ENCODE measurements at regions of chr3 and their contacts with region 1.

Region 1: DNA sequence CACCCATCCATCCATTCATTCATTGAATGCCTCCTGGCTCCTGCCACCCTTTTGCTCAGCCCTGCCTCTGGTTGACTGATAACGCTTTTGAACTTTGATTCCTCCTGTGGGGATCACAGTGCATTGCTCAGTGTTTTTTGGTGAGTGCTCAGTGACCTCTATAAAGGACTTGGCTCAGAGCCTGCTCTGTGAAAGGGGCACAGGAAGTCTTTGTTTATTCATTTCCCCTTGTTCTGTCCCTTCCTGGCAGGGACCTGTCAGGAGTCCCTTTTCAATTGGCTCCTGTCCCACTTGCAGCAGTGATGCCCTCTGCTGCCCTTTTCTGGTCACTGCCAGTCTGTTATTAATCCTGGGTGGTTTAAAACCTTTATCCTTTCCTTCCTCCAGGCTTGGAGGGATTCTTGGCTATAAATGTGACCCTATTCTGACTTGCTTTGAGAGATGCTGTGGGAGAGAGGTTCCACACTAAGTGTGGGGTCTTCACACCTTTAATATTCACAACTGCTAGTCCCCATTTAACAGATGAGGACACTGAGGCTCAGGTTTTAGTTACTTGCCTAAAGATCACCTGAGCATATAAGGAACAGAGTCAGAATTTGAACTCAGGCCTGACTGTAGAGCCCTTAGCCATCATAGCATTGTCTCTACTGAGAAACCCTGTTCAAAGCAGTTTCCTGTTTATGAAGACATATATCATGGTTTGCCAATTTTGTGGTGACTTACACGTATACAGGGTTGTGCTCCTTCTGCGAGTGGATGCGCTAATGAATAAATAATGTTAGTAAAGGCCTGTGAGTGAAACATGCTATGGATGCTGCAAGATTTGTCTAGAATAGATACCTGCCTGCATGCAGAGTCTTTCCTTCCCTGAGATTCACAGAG is 23.2 kb upstream of the TATDN2 start:
- DNase-seq: peak; percentile 72 to 73
- H3K4me3 ChIP-seq: no peak overlapping the region
- H3K27ac ChIP-seq: no peak overlapping the region
- H3K4me1 ChIP-seq: peaks cover 42% of the 10 kb centered on the region
- H3K27me3 ChIP-seq: no peaks in the 10 kb centered on the region
- CTCF ChIP-seq: peak; percentile 90

Region 2: GRCh38 chr3:10085736-10086135 is 139.3 kb before region 1 on chr3:
- CTCF ChIA-PET with region 1: no interaction called
- POLR2A ChIA-PET with region 1: no interaction called
- intact Hi-C with region 1: loop called (anchors 10 kb)
- DNase-seq: peak; percentile 14 to 81
- H3K4me3 ChIP-seq: no peak overlapping the region
- H3K27ac ChIP-seq: peak overlapping the region; percentile 55
- H3K4me1 ChIP-seq: peaks cover 26% of the 10 kb centered on the region
- H3K27me3 ChIP-seq: no peaks in the 10 kb centered on the region
- CTCF ChIP-seq: no peak

Region 3: GRCh38 chr3:10142707-10143566 is 82.1 kb before region 1 on chr3:
- CTCF ChIA-PET with region 1: interaction called, 5 read pairs
- POLR2A ChIA-PET with region 1: interaction called, 8 read pairs
- intact Hi-C with region 1: loop called (anchors 2 kb)
- DNase-seq: peak in 1 of 2 experiments; percentile 43
- H3K4me3 ChIP-seq: peak overlapping the region; percentile 100
- H3K27ac ChIP-seq: peak overlapping the region; percentile 47
- H3K4me1 ChIP-seq: peaks cover 27% of the 10 kb centered on the region
- H3K27me3 ChIP-seq: no peaks in the 10 kb centered on the region
- CTCF ChIP-seq: no peak

Region 4: GRCh38 chr3:10164546-10165393 is 60.3 kb before region 1 on chr3 and contains the start of gene IRAK2:
- CTCF ChIA-PET with region 1: no interaction called
- POLR2A ChIA-PET with region 1: interaction called, 3 read pairs
- intact Hi-C with region 1: loop called (anchors 1 kb)
- DNase-seq: peak in 1 of 2 experiments; percentile 65
- H3K4me3 ChIP-seq: peak within 1 kb of the TSS; percentile 99
- H3K27ac ChIP-seq: peak within 1 kb of the TSS; percentile 50
- H3K4me1 ChIP-seq: peaks cover 26% of the 10 kb centered on the region
- H3K27me3 ChIP-seq: no peaks in the 10 kb centered on the region
- CTCF ChIP-seq: peak; percentile 74
- total RNA-seq, gene IRAK2: 2.6 and 2.7 TPM in 2 replicates

Region 5: GRCh38 chr3:10192953-10193691 is 31.9 kb before region 1 on chr3:
- CTCF ChIA-PET with region 1: interaction called, 29 read pairs
- POLR2A ChIA-PET with region 1: no interaction called
- intact Hi-C with region 1: loop called (anchors 1 kb)
- DNase-seq: peak; percentile 30 to 56
- H3K4me3 ChIP-seq: no peak overlapping the region
- H3K27ac ChIP-seq: peak overlapping the region; percentile 97
- H3K4me1 ChIP-seq: peaks cover 84% of the 10 kb centered on the region
- H3K27me3 ChIP-seq: no peaks in the 10 kb centered on the region
- CTCF ChIP-seq: no peak

Region 6: DNA sequence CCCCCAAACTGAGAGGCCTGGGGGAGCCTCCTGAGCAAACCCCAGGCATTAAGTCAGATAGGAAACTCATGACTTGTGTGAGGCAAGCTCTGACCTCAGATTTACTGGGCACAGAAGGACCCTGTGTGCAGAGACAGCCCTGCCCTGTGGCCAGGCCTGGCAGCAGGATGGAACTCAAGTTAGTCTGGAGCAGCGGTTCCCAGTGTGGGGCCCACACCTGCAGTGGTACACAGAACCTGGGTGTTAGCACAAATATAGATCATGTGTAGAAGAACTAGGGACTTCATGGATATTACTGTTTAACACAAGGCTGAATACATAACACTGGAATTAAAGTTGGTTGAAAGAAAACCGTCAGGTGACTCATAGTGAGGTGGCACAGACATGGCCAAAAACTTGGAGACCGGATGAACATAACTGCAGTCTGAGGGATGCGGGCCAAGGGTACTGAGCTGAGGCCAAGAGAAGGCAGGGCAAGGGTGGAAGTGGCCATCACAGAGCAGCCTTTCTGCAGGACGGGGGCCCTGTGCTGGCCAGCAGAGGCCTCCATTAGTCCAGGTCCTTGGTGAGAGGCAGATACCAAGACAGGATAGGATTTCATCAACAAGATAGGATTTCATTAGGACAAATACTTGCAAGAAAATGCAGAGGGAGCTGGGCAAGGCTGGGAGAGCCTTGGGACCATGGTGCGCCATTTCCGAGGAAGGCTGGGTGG is 19.4 kb before region 1 on chr3:
- CTCF ChIA-PET with region 1: interaction called, 4 read pairs
- POLR2A ChIA-PET with region 1: interaction called, 9 read pairs
- intact Hi-C with region 1: loop called (anchors 2 kb)
- DNase-seq: peak; percentile 76 to 86
- H3K4me3 ChIP-seq: no peak overlapping the region
- H3K27ac ChIP-seq: peak overlapping the region; percentile 97
- H3K4me1 ChIP-seq: peaks cover 71% of the 10 kb centered on the region
- H3K27me3 ChIP-seq: no peaks in the 10 kb centered on the region
- CTCF ChIP-seq: no peak

Measured in PC-9 (cell line).